CD4-positive, alpha-beta T cell (primary cell): ENCODE measurements at regions of chr16 and their contacts with region 1.

Region 1: DNA sequence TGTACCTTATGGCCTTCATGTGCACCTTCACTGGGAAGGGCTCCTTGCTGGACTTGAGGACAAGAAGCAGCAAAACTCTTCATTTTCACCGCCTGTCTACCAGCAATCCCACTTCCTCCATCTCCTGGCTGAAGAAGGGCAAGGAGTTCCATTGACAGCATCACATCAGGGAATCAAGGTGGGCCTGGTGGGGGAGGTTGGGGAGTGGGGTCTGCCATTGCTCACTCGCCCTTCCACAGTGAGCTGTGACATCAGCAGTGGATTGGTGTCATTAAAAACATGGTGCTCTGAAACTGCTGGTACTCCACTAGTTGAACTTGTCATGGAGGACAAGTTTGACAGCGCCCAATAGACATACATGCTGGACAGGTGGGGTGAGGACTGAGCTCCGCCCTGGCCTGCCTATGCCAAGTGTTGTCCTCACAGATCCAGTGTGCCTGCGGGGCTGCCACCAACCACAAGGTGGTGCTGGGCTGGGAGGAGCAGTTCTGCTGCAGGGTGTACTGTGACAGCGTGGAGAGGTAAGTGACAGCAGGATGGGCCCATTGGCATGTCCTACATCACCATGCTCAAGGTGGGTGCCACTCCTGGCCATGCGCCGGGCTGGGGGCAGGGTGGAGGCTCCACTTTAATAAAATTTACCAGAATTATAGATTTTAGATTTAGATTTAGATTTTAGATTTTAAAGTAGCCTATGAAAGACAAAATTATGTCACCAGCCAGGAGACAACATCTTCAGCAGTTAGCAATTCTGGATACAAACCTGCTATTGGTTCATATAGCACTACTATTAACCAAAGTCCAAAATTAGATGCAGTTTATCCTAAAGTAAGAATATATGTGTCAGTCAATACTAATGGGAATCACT is 1729.1 kb downstream of the TP53TG3F start:
- DNase-seq: no peak
- ATAC-seq: no peak
- H3K4me3 ChIP-seq: no peak overlapping the region
- H3K4me3 Mint-ChIP-seq: no peak overlapping the region
- H3K27ac ChIP-seq: no peak overlapping the region
- H3K27ac Mint-ChIP-seq: no peak overlapping the region
- H3K4me1 ChIP-seq: no peaks in the 10 kb centered on the region
- H3K4me1 Mint-ChIP-seq: no peaks in the 10 kb centered on the region
- H3K27me3 ChIP-seq: no peaks in the 10 kb centered on the region
- H3K27me3 Mint-ChIP-seq: no peaks in the 10 kb centered on the region
- CTCF ChIP-seq: no peak

Region 2: DNA sequence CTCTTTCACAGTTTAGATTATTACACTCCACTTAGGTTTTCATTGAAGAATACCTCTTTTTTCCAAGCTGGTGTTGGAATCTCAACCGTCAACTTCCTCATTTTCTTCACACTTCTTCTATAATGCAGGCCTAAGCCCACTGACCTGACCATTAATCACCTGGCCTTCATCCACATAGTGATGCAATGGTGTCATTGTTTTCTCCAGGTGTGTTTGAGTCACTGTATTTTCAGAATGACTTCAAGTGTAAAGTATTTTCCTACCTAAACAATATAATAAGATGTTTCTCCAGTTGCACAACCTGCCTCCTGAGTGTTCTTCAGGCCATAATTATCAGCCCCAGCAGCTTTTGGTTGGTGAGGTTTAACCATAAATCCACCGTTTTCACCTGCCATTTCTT is 54.1 kb before region 1 on chr16:
- CTCF ChIA-PET with region 1: no interaction called
- POLR2A ChIA-PET with region 1: no interaction called
- intact Hi-C with region 1: loop called in 1 of 2 experiments (anchors 10 kb)
- DNase-seq: no peak
- ATAC-seq: no peak
- H3K4me3 ChIP-seq: no peak overlapping the region
- H3K4me3 Mint-ChIP-seq: no peak overlapping the region
- H3K27ac ChIP-seq: no peak overlapping the region
- H3K27ac Mint-ChIP-seq: no peak overlapping the region
- H3K4me1 ChIP-seq: no peaks in the 10 kb centered on the region
- H3K4me1 Mint-ChIP-seq: no peaks in the 10 kb centered on the region
- H3K27me3 ChIP-seq: no peaks in the 10 kb centered on the region
- H3K27me3 Mint-ChIP-seq: no peaks in the 10 kb centered on the region
- CTCF ChIP-seq: no peak

Region 3: GRCh38 chr16:35598696-35599332 is 410.3 kb after region 1 on chr16:
- CTCF ChIA-PET with region 1: no interaction called
- POLR2A ChIA-PET with region 1: no interaction called
- intact Hi-C with region 1: no loop called
- DNase-seq: no peak
- ATAC-seq: no peak
- H3K4me3 ChIP-seq: no peak overlapping the region
- H3K4me3 Mint-ChIP-seq: no peak overlapping the region
- H3K27ac ChIP-seq: no peak overlapping the region
- H3K27ac Mint-ChIP-seq: no peak overlapping the region
- H3K4me1 ChIP-seq: no peaks in the 10 kb centered on the region
- H3K4me1 Mint-ChIP-seq: no peaks in the 10 kb centered on the region
- H3K27me3 ChIP-seq: no peaks in the 10 kb centered on the region
- H3K27me3 Mint-ChIP-seq: no peaks in the 10 kb centered on the region
- CTCF ChIP-seq: no peak